ENCODE measurements at regions of chr11 and their contacts with region 1.

Region 1: DNA sequence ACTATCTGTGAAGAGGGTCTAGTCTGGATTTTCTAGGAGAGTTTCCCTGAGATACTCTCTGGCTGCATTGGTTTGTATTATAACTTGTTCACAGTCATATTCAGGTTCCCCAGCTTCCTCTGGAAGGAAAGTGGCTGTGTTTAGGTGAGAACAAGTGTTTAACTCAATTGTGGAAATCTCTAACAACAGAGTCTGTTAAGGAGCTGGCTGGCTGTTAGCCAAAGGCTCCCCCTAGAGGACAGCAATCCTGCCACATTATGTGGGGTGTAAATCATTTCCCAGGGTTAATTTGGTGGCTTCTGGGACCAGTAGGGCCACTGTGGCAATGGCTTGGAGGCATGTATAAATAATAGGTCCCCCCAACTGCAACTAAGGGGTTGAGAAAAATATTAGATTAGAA is 18.4 kb downstream of the MS4A6E start:
- DNase-seq: peak; percentile 41
- H3K4me3 Mint-ChIP-seq: no peak overlapping the region
- H3K27ac Mint-ChIP-seq: no peak overlapping the region
- H3K4me1 Mint-ChIP-seq: no peaks in the 10 kb centered on the region
- H3K27me3 Mint-ChIP-seq: peaks cover 21% of the 10 kb centered on the region

Region 2: GRCh38 chr11:60235321-60235720 is 110.2 kb before region 1 on chr11:
- CTCF ChIA-PET with region 1: no interaction called
- intact Hi-C with region 1: no loop called
- DNase-seq: no peak
- H3K4me3 Mint-ChIP-seq: no peak overlapping the region
- H3K27ac Mint-ChIP-seq: no peak overlapping the region
- H3K4me1 Mint-ChIP-seq: no peaks in the 10 kb centered on the region
- H3K27me3 Mint-ChIP-seq: peaks cover 4% of the 10 kb centered on the region

Region 3: DNA sequence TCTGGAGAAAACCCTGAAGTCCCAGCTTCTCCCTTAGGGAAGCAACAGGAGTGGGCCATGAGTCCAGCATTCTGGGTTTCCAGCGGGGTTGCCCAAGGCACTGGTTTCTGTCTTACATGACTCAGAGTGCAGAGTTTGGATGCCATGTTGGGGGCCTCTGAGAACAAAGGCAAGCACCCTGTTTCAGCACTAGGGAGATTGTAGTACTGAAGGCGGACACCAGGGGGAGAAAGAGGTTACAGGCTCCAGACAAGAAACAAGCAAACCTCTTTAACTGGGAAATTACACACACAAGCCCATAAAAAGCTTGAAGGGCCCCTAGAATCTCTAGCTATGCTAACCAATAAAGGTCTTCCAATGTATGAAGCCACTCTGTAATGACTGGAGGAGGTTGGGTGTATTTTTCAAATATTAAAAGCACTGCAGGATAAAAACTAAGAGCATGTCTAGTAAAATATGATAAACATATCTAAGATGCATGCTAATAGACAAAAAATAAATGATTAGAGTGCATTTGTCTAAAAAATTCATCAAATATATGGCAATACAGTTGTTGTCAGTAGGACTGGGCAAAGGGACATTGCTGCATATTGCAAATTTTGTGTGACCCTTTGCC is 11.4 kb before region 1 on chr11:
- CTCF ChIA-PET with region 1: interaction called, 13 read pairs
- intact Hi-C with region 1: no loop called
- DNase-seq: peak; percentile 82
- H3K4me3 Mint-ChIP-seq: no peak overlapping the region
- H3K27ac Mint-ChIP-seq: no peak overlapping the region
- H3K4me1 Mint-ChIP-seq: no peaks in the 10 kb centered on the region
- H3K27me3 Mint-ChIP-seq: peaks cover 11% of the 10 kb centered on the region

Measured in activated naive CD4-positive, alpha-beta T cell treated with anti-CD3 and anti-CD28 coated beads for 36 hours (primary cell).